Heart right ventricle (tissue), 16 donors: ENCODE measurements at regions of chr3 and their contacts with region 1.

Region 1: GRCh38 chr3:57864853-57865252 is 108.7 kb downstream of the SLMAP start:
- DNase-seq: no peak
- ATAC-seq: no peak
- H3K4me3 ChIP-seq: no peak overlapping the region
- H3K27ac ChIP-seq: no peak overlapping the region
- H3K4me1 ChIP-seq: peaks cover 0 to 7% (median 0%) of the 10 kb centered on the region in 9 donors
- H3K27me3 ChIP-seq: no peaks in the 10 kb centered on the region
- CTCF ChIP-seq: peak in 8 of 9 donors; percentile 23 to 66 (median 44)

Region 2: GRCh38 chr3:58116161-58116955 is 251.5 kb after region 1 on chr3:
- intact Hi-C with region 1: loop called in 1 of 10 experiments (anchors 10 kb)
- DNase-seq: no peak
- ATAC-seq: no peak
- H3K4me3 ChIP-seq: no peak overlapping the region
- H3K27ac ChIP-seq: peak overlapping the region in 3 of 10 donors; percentile 16 to 51 (median 40)
- H3K4me1 ChIP-seq: peaks cover 18 to 56% (median 47%) of the 10 kb centered on the region in 9 donors
- H3K27me3 ChIP-seq: no peaks in the 10 kb centered on the region
- CTCF ChIP-seq: no peak

Region 3: GRCh38 chr3:58177747-58178527 is 313.1 kb after region 1 on chr3:
- intact Hi-C with region 1: loop called in 1 of 10 experiments (anchors 5 kb)
- DNase-seq: peak; percentile 90 to 94
- ATAC-seq: peak; percentile 80 to 87 (median 86)
- H3K4me3 ChIP-seq: peak overlapping the region in 9 of 10 donors; percentile 35 to 60 (median 50)
- H3K27ac ChIP-seq: peak overlapping the region in 1 of 10 donors; percentile 8
- H3K4me1 ChIP-seq: peaks cover 14 to 52% (median 42%) of the 10 kb centered on the region in 9 donors
- H3K27me3 ChIP-seq: peaks cover 0 to 7% (median 0%) of the 10 kb centered on the region in 7 donors
- CTCF ChIP-seq: peak; percentile 89 to 97 (median 95)